Activated CD8-positive, alpha-beta T cell treated with anti-CD3 and anti-CD28 coated beads for 36 hours (primary cell): ENCODE measurements at regions of chr7 and their contacts with region 1.

Region 1: DNA sequence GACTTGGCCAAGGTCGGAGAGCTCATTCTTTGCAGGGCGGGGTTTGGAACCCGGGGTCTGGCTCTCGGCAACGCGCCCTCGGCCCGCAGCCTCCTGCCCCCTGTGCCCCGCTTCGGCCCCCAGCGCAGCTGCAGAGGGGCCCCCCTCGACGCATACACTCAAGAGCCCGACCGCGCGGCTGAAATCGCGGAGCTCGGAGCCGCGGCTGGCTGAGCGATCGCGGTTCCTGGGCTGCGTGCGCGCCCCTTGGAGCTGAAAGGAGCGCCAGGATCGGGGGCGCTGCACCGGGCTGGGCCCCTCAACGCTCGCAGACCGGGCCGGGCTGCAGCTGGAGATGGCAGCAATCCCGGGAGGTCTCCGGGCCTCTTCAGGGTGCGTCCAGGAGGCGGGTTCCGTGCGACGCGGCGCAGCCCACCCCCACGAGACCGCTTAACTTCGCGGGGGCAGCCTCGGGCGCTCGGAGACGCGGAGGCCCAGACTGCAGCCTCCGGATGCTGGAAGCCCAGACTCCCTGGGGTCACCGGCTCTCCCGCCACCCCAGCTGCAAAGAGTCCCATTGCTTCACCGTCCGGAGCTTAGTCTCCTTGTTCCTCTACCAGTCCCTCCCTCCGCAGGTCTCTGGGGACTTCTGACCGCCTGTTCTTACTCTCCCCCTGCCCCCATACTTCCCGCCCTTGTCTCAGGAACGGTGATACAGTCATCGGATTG is 73.0 kb upstream of the LRRC4 start:
- DNase-seq: peak; percentile 37
- ATAC-seq: peak; percentile 22
- H3K4me3 Mint-ChIP-seq: peak overlapping the region; percentile 75
- H3K27ac Mint-ChIP-seq: peak overlapping the region; percentile 62
- H3K4me1 Mint-ChIP-seq: peaks cover 50% of the 10 kb centered on the region
- H3K27me3 Mint-ChIP-seq: peaks cover 4% of the 10 kb centered on the region
- CTCF ChIP-seq: no peak

Region 2: DNA sequence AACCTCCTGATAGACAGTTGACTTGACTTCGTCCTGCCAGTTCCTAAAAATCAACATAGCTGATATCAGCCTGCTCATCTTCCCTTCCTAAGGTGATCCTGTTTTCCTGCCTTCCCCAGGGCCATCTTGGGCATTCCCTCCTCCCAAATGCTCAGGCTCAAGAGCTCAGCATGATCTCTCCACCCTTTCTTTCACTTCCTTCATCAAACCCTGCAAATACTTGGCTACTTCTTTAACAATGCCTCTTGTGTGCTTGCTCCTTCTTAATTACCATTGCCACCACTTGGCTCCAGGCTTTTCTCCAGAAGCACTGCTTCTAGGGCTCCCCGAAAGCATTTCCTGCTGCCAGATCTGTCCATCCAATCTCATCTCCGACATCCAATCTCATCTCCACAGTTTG is 503.3 kb before region 1 on chr7:
- CTCF ChIA-PET with region 1: no interaction called
- POLR2A ChIA-PET with region 1: no interaction called
- intact Hi-C with region 1: no loop called
- DNase-seq: no peak
- ATAC-seq: no peak
- H3K4me3 Mint-ChIP-seq: no peak overlapping the region
- H3K27ac Mint-ChIP-seq: no peak overlapping the region
- H3K4me1 Mint-ChIP-seq: no peaks in the 10 kb centered on the region
- H3K27me3 Mint-ChIP-seq: no peaks in the 10 kb centered on the region
- CTCF ChIP-seq: no peak

Region 3: DNA sequence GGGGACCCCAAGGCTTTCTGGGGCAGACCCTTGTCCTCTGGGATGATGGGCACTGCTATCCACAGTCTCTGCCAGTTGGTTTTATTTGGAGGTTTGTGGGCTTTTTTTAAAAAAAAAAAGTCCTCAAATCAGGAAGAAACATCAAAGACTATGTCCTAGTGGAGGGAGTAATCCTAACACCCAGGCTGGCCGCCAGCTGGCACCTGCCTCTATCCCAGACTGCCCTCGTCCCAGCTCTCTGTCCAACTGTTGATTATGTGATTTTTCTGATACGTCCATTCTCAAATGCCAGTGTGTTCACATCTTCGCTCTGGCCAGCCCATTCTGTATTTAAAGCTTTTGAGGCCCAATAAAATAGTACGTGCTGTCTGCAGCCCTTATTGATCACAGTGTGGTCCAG is 12.0 kb before region 1 on chr7:
- CTCF ChIA-PET with region 1: interaction called, 3 read pairs
- POLR2A ChIA-PET with region 1: interaction called, 12 read pairs
- intact Hi-C with region 1: no loop called
- DNase-seq: no peak
- ATAC-seq: no peak
- H3K4me3 Mint-ChIP-seq: no peak overlapping the region
- H3K27ac Mint-ChIP-seq: no peak overlapping the region
- H3K4me1 Mint-ChIP-seq: no peaks in the 10 kb centered on the region
- H3K27me3 Mint-ChIP-seq: no peaks in the 10 kb centered on the region
- CTCF ChIP-seq: no peak

Region 4: GRCh38 chr7:128121711-128122530 is 17.7 kb after region 1 on chr7:
- CTCF ChIA-PET with region 1: no interaction called
- POLR2A ChIA-PET with region 1: no interaction called
- intact Hi-C with region 1: no loop called
- DNase-seq: no peak
- ATAC-seq: no peak
- H3K4me3 Mint-ChIP-seq: no peak overlapping the region
- H3K27ac Mint-ChIP-seq: no peak overlapping the region
- H3K4me1 Mint-ChIP-seq: peaks cover 6% of the 10 kb centered on the region
- H3K27me3 Mint-ChIP-seq: no peaks in the 10 kb centered on the region
- CTCF ChIP-seq: no peak

Region 5: DNA sequence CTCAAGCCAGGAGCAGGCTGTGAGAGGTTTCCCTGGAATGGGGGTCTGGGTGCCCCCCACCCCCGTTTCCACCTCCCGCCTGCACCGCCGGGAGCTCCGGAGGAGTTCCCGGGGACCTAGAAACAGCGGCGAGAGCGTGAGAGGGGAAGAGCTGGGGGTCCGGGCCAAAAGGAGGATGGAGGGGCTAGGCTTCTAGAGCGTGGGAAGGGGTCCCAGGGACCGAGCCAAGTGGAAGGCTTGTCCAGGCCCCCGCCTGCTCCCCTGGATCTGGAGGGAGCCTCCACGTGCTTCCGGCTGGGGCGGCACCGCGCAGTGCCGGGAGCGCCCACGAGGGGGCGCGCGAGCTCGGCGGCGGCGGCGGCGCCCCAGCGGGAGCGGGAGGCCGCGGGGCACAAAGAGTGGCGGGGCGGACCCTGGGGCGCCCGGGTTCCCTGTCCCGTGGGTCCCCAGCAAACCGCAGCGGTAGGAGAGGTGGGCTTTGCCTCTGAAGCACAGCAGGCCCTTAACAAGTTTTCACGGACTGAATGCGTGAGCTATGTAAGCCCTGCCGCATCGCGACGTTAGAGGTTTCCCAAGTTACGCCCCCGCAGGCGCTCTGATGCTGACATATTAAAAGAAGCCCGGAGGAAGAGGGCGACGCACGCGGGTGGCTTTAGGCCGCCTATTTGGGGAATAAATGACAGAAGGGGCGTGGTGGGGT is 31.5 kb after region 1 on chr7:
- CTCF ChIA-PET with region 1: interaction called, 25 read pairs
- POLR2A ChIA-PET with region 1: interaction called, 4 read pairs
- intact Hi-C with region 1: no loop called
- DNase-seq: peak; percentile 85
- ATAC-seq: peak; percentile 97
- H3K4me3 Mint-ChIP-seq: peak overlapping the region; percentile 65
- H3K27ac Mint-ChIP-seq: peak overlapping the region; percentile 28
- H3K4me1 Mint-ChIP-seq: peaks cover 16% of the 10 kb centered on the region
- H3K27me3 Mint-ChIP-seq: peaks cover 19% of the 10 kb centered on the region
- CTCF ChIP-seq: peak; percentile 85

Region 6: DNA sequence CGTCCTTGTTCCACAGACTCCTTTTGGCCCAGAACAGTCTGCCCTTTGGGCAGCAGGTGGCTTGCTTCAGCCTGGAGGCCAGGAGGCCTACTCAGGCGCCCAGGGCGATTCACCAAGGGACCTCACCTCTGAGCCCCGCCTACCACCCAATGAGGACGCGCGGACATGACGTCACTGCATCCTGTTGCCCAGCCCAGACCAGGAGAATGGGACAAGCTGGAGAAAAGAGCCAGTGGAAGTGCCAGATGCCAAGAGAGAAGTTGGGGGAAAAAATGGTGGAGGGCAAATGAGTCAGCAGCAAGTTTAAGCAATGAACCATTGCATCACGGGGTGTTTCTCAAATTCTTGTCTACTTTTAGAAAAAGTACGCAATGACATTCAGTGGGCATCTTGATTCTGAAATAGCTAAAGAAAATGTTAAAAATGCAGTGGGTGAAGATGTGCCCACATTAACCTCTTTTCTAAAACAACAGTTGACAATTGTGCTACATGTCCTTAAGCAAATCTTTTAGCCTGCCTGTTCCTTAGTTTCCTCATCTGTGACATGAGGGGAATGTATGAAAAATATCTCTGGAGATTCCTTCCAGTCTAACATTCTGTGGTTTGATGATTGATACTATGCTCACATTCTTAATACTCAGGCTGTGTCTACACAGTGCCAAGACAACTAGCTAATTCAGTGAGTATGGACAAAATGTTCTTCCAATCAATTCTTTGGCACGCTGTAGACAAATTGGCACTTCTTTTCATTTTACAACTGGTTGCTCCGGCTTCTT is 113.0 kb after region 1 on chr7:
- CTCF ChIA-PET with region 1: no interaction called
- POLR2A ChIA-PET with region 1: no interaction called
- intact Hi-C with region 1: no loop called
- DNase-seq: no peak
- ATAC-seq: no peak
- H3K4me3 Mint-ChIP-seq: no peak overlapping the region
- H3K27ac Mint-ChIP-seq: no peak overlapping the region
- H3K4me1 Mint-ChIP-seq: no peaks in the 10 kb centered on the region
- H3K27me3 Mint-ChIP-seq: no peaks in the 10 kb centered on the region
- CTCF ChIP-seq: no peak

Region 7: GRCh38 chr7:129285111-129285510 is 1180.9 kb after region 1 on chr7:
- CTCF ChIA-PET with region 1: no interaction called
- POLR2A ChIA-PET with region 1: no interaction called
- intact Hi-C with region 1: no loop called
- DNase-seq: no peak
- ATAC-seq: no peak
- H3K4me3 Mint-ChIP-seq: no peak overlapping the region
- H3K27ac Mint-ChIP-seq: no peak overlapping the region
- H3K4me1 Mint-ChIP-seq: no peaks in the 10 kb centered on the region
- H3K27me3 Mint-ChIP-seq: no peaks in the 10 kb centered on the region
- CTCF ChIP-seq: no peak